ENCODE measurements at regions of chr1 and their contacts with region 1.

Region 1: DNA sequence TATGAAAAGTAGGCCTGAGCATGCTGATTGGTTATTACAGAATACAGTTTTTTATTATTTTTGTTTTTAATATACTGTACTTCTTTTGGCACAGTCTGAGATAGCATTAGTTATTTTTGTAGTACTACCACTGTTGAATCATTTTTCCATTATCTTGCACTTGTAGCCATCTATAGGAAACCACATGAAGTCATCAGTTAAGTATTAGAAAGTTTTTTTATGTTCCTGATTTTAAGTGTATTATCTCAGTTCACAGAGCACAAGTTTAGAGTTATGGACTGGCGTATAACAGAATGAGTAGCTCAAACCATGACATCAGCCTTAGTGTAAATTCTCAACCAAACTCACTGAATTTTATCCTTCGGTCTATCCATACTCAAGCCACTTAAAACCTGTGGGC is 22.8 kb downstream of the DHX9 start:
- DNase-seq: no peak
- H3K4me3 ChIP-seq: no peak overlapping the region
- H3K27ac ChIP-seq: no peak overlapping the region
- H3K4me1 ChIP-seq: no peaks in the 10 kb centered on the region
- H3K27me3 ChIP-seq: no peaks in the 10 kb centered on the region
- CTCF ChIP-seq: no peak
- EP300 ChIP-seq: no peak
- POLR2A ChIP-seq: no peak
- RAD21 ChIP-seq: no peak

Region 2: DNA sequence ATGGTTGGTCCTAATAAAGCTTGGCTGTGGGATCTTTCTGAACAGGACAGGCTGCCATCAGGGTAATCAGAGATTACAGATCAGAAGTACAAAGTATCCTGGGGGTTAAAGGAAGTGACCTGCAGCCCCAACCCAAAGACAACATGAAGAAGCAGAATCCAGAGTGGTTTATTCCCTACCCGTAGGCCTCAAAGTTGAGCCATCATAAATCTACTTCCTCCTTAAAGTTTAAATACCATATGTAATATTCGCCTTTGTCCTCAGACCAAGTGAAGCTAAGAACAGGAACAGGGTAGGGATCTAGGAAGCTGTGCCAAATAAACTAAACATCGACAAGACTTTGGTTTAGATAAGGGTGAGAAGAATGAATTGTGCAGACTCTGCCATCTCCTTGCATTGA is 38.8 kb before region 1 on chr1:
- CTCF ChIA-PET with region 1: no interaction called
- POLR2A ChIA-PET with region 1: no interaction called
- DNase-seq: no peak
- H3K4me3 ChIP-seq: no peak overlapping the region
- H3K27ac ChIP-seq: no peak overlapping the region
- H3K4me1 ChIP-seq: no peaks in the 10 kb centered on the region
- H3K27me3 ChIP-seq: no peaks in the 10 kb centered on the region
- CTCF ChIP-seq: no peak
- EP300 ChIP-seq: no peak
- POLR2A ChIP-seq: no peak
- RAD21 ChIP-seq: no peak

Region 3: DNA sequence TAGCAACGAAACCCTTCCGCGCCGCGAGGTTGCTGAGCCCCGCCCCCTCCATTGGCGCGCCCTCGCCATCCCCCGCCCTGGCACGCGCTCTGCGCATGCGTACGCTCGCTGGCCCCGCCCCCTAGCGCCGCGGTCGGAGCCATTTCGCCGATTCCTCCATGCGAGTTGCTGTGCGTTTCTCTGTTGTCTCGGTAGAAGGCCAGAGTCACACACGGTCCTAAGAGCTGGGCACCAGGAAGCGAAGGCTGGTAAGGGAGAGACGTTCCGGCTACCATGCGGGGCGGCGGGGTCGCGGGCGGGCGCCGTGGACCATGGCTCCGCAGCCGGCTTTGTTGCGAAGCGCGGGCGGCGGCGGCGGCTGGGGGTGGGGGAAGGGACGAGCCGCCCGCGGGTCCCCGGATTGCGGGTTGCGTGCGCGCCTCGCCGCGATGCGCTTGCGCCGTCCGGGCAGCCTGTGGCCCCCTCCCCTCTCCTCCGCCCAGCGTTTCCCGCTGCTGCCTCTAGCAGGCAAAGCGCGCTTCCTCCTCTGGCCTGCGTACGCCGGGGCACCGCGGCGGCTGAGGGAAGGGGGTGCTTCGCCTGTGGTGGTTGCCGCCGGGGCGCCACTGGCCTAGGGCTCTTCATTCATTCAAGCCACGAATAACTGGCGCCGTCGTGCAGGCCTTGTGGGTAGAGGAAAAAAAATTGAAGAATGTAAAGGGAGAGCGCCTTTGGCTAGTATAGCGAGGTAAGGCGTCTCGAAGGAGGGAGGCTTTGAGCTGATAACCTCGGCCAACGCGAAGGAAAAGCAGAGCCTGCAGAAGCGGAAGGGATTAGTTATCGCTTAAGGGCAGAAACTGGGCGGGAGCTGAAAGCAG is 22.6 kb before region 1 on chr1 and contains the start of gene DHX9:
- CTCF ChIA-PET with region 1: no interaction called
- POLR2A ChIA-PET with region 1: interaction called, 93 read pairs
- DNase-seq: peak; percentile 69 to 99
- H3K4me3 ChIP-seq: peak within 1 kb of the TSS; percentile 88 to 99 (median 94)
- H3K27ac ChIP-seq: peak within 1 kb of the TSS; percentile 98
- H3K4me1 ChIP-seq: peaks cover 0 to 6% (median 3%) of the 10 kb centered on the region in 4 experiments; a peak in 4 of 7 replicates
- H3K27me3 ChIP-seq: no peaks in the 10 kb centered on the region
- CTCF ChIP-seq: peak; percentile 15 to 32 (median 29); a peak in 3 of 4 replicates
- EP300 ChIP-seq: no peak
- POLR2A ChIP-seq: peak; percentile 98
- RAD21 ChIP-seq: no peak
- total RNA-seq, gene DHX9: 329 and 333 TPM in 2 replicates

Region 4: GRCh38 chr1:182845379-182845778 is 16.6 kb before region 1 on chr1:
- CTCF ChIA-PET with region 1: interaction called, 3 read pairs
- POLR2A ChIA-PET with region 1: interaction called, 93 read pairs
- DNase-seq: no peak
- H3K4me3 ChIP-seq: 0 out of 8 replicates have a peak overlapping the region, but pooled peaks of 1 of the 4 experiments have one; percentile 9
- H3K27ac ChIP-seq: no peak overlapping the region
- H3K4me1 ChIP-seq: peaks cover 0 to 15% (median 6%) of the 10 kb centered on the region in 4 experiments; a peak in 4 of 7 replicates
- H3K27me3 ChIP-seq: no peaks in the 10 kb centered on the region
- CTCF ChIP-seq: no peak
- EP300 ChIP-seq: no peak
- POLR2A ChIP-seq: no peak
- RAD21 ChIP-seq: no peak

Region 5: GRCh38 chr1:182877842-182878241 is 15.8 kb after region 1 on chr1:
- CTCF ChIA-PET with region 1: interaction called, 6 read pairs
- POLR2A ChIA-PET with region 1: interaction called, 34 read pairs
- DNase-seq: no peak
- H3K4me3 ChIP-seq: no peak overlapping the region
- H3K27ac ChIP-seq: no peak overlapping the region
- H3K4me1 ChIP-seq: no peaks in the 10 kb centered on the region
- H3K27me3 ChIP-seq: no peaks in the 10 kb centered on the region
- CTCF ChIP-seq: no peak
- EP300 ChIP-seq: no peak
- POLR2A ChIP-seq: no peak
- RAD21 ChIP-seq: no peak

Region 6: GRCh38 chr1:182884872-182885271 is 22.9 kb after region 1 on chr1:
- CTCF ChIA-PET with region 1: interaction called, 7 read pairs
- POLR2A ChIA-PET with region 1: interaction called, 34 read pairs
- DNase-seq: no peak
- H3K4me3 ChIP-seq: no peak overlapping the region
- H3K27ac ChIP-seq: no peak overlapping the region
- H3K4me1 ChIP-seq: no peaks in the 10 kb centered on the region
- H3K27me3 ChIP-seq: no peaks in the 10 kb centered on the region
- CTCF ChIP-seq: no peak
- EP300 ChIP-seq: no peak
- POLR2A ChIP-seq: no peak
- RAD21 ChIP-seq: no peak